HCT116 (cell line): ENCODE measurements at regions of chr20 and their contacts with region 1.

Region 1: GRCh38 chr20:50790651-50791277 is 4.1 kb upstream of the BCAS4 start:
- DNase-seq: peak; percentile 82
- ATAC-seq: peak; percentile 83
- H3K4me3 ChIP-seq: peak overlapping the region in 1 of 2 experiments; percentile 28; a peak in 2 of 4 replicates
- H3K27ac ChIP-seq: peak overlapping the region; percentile 83
- H3K4me1 ChIP-seq: peaks cover 22 to 54% of the 10 kb centered on the region in 2 experiments
- H3K27me3 ChIP-seq: no peaks in the 10 kb centered on the region
- CTCF ChIP-seq: peak; percentile 64 to 86 (median 74); a peak in 5 of 6 replicates
- POLR2A ChIP-seq: peak; percentile 54
- RAD21 ChIP-seq: peak; percentile 46

Region 2: GRCh38 chr20:50588034-50588611 is 202.6 kb before region 1 on chr20:
- CTCF ChIA-PET with region 1: interaction called, 10 read pairs
- POLR2A ChIA-PET with region 1: no interaction called
- RAD21 ChIA-PET with region 1: no interaction called
- intact Hi-C with region 1: loop called (anchors 2 kb)
- DNase-seq: peak; percentile 39
- ATAC-seq: peak; percentile 88
- H3K4me3 ChIP-seq: no peak overlapping the region
- H3K27ac ChIP-seq: no peak overlapping the region
- H3K4me1 ChIP-seq: no peaks in the 10 kb centered on the region
- H3K27me3 ChIP-seq: no peaks in the 10 kb centered on the region
- CTCF ChIP-seq: peak; percentile 97 to 100 (median 100)
- POLR2A ChIP-seq: no peak
- RAD21 ChIP-seq: peak; percentile 68

Region 3: GRCh38 chr20:50635667-50636503 is 154.9 kb before region 1 on chr20:
- CTCF ChIA-PET with region 1: interaction called, 13 read pairs
- POLR2A ChIA-PET with region 1: interaction called, 3 read pairs
- RAD21 ChIA-PET with region 1: no interaction called
- intact Hi-C with region 1: no loop called
- DNase-seq: peak; percentile 67
- ATAC-seq: peak; percentile 87
- H3K4me3 ChIP-seq: peak overlapping the region; percentile 44 to 56
- H3K27ac ChIP-seq: peak overlapping the region; percentile 11; the same call in 1 of the 2 replicates
- H3K4me1 ChIP-seq: peaks cover 13 to 30% of the 10 kb centered on the region in 2 experiments
- H3K27me3 ChIP-seq: no peaks in the 10 kb centered on the region
- CTCF ChIP-seq: peak; percentile 75 to 99 (median 99); a peak in 5 of 6 replicates
- POLR2A ChIP-seq: no peak
- RAD21 ChIP-seq: peak; percentile 64

Region 4: DNA sequence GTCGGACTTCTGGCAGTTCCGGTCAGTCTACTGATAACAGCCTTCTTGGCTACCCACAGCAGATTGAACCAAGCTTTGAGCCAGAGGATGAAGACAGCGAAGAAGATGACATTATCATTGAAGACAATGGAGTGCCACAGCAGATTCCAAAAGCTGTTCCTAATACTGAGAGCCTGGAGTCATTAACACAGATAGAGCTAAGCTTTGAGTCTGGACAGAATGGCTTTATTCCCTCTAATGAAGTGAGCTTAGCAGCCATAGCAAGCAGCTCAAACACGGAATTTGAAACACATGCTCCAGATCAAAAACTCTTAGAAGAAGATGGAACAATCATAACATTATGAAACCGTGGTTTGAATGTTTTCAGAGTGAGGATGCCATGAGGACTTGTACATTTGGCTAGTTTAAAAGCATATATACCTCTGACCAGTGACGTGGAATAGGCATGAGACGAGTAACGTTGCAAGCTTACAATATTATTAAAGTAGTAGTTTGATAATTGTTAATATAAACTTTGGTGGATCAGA is 40.6 kb before region 1 on chr20:
- CTCF ChIA-PET with region 1: interaction called, 13 read pairs
- POLR2A ChIA-PET with region 1: interaction called, 5 read pairs
- RAD21 ChIA-PET with region 1: interaction called in 1 of 2 experiments, 3 read pairs
- intact Hi-C with region 1: no loop called
- DNase-seq: no peak
- ATAC-seq: no peak
- H3K4me3 ChIP-seq: no peak overlapping the region
- H3K27ac ChIP-seq: no peak overlapping the region
- H3K4me1 ChIP-seq: peaks cover 28 to 31% of the 10 kb centered on the region in 2 experiments
- H3K27me3 ChIP-seq: no peaks in the 10 kb centered on the region
- CTCF ChIP-seq: no peak
- POLR2A ChIP-seq: no peak
- RAD21 ChIP-seq: no peak

Region 5: DNA sequence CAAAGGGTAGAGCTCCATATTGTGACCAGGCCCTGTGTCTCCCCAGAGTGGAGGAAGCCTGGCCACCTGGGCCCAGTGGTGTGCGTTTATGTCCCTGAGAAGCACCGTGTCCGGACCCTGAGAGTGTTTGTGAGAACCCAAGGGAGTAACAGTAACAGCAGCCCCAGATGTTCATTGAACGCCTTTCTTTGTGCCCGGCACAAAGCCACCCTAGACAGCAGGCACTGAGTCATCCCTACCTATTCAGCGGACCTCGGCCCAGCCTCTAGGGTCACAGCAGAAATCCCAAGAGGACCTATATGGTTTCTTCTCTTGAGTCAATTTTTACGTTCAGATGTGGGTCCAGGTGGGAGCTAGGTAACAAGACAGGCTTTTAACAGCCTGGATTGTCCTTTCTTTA is 28.6 kb after region 1 on chr20:
- CTCF ChIA-PET with region 1: interaction called, 16 read pairs
- POLR2A ChIA-PET with region 1: no interaction called
- RAD21 ChIA-PET with region 1: interaction called, 3 read pairs
- intact Hi-C with region 1: no loop called
- DNase-seq: no peak
- ATAC-seq: no peak
- H3K4me3 ChIP-seq: no peak overlapping the region
- H3K27ac ChIP-seq: peak overlapping the region; percentile 49; the same call in 1 of the 2 replicates
- H3K4me1 ChIP-seq: peaks cover 16% of the 10 kb centered on the region in 2 experiments; a peak in 3 of 4 replicates
- H3K27me3 ChIP-seq: no peaks in the 10 kb centered on the region
- CTCF ChIP-seq: no peak
- POLR2A ChIP-seq: no peak
- RAD21 ChIP-seq: no peak

Region 6: GRCh38 chr20:50980851-50981713 is 190.3 kb after region 1 on chr20:
- CTCF ChIA-PET with region 1: interaction called, 11 read pairs
- POLR2A ChIA-PET with region 1: no interaction called
- RAD21 ChIA-PET with region 1: no interaction called
- intact Hi-C with region 1: no loop called
- DNase-seq: peak; percentile 41
- ATAC-seq: peak; percentile 76
- H3K4me3 ChIP-seq: no peak overlapping the region
- H3K27ac ChIP-seq: no peak overlapping the region
- H3K4me1 ChIP-seq: peaks cover 0 to 14% of the 10 kb centered on the region in 2 experiments; a peak in 2 of 4 replicates
- H3K27me3 ChIP-seq: no peaks in the 10 kb centered on the region
- CTCF ChIP-seq: peak; percentile 48 to 96 (median 85); a peak in 5 of 6 replicates
- POLR2A ChIP-seq: no peak
- RAD21 ChIP-seq: peak; percentile 75

Region 7: DNA sequence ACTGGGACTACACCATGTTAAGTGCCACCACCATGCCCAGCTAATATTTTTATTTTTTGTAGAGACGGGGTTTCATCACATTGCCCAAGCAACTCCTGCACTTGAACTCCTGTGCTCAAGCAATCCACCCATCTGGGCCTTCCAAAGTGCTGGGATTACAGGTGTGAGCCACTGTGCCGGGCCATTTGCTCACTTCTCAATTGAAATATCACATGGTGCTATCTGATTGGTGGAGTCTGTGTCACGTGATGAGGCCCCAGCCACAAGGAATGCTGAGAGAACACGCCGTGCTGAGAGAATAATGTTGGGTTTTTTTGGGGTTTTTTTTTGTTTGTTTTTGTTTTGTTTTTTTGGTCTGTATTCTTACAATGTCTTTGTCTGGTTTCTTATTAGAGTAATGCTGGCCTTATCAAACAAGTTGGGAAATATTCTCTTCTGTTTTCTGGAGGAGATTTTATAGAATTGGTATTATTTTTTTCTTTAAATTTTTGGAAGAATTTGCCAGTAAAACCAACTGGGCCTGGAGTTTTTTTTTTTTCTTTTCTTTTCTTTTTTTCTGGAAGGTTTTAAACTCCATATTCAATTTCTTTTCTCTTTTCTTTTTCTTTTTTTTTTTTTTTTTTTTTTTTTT is 415.4 kb after region 1 on chr20:
- CTCF ChIA-PET with region 1: no interaction called
- POLR2A ChIA-PET with region 1: no interaction called
- RAD21 ChIA-PET with region 1: no interaction called
- intact Hi-C with region 1: no loop called
- DNase-seq: peak; percentile 21
- ATAC-seq: peak; percentile 58; the same call in 1 of the 2 replicates
- H3K4me3 ChIP-seq: no peak overlapping the region
- H3K27ac ChIP-seq: no peak overlapping the region
- H3K4me1 ChIP-seq: no peaks in the 10 kb centered on the region; a peak in 1 of 4 replicates
- H3K27me3 ChIP-seq: peaks cover 25% of the 10 kb centered on the region; the same call in 1 of the 2 replicates
- CTCF ChIP-seq: no peak
- POLR2A ChIP-seq: no peak
- RAD21 ChIP-seq: no peak

Region 8: DNA sequence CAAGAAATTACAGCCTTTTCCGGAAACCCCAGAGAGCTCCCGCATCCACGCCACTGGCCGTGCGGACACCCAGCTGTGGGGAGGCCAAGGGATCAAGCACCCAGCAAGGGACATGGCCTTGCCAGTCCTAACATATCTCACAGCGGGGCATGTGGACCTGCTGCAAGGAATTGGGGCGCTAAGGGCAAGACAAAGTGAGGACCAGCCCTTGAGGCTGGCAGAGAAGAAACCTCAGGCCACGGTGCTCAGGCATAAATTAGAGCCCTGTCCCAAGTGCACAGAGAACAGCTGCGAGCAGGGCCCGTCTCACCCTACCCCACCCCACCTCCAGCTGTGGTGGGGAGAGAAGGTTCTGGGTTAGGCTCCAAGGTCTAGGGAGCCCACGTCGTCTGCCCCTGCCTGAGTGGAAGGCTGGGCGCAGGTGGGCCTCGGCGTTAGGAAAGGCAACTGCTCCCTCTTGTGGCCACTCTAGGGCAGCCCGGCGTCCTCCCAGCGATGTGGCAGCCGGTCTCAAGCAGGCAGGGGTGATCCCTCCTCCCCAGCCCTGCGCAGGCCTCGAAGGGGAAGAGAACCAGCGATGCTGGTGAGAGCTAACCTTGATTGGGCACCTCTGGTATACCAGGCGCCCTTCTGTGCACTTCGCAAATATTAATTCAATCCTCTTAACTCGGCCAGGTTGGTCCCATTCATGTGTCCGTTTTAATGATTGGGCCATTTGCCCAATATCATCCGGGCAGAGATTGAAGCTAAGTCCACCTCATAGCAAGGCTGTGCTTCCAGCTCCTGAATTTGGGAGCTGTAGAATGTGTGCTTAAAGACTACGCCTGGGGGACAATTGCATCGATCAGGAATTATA is 516.0 kb after region 1 on chr20:
- CTCF ChIA-PET with region 1: interaction called, 9 read pairs
- POLR2A ChIA-PET with region 1: no interaction called
- RAD21 ChIA-PET with region 1: no interaction called
- intact Hi-C with region 1: loop called (anchors 5 kb)
- DNase-seq: peak; percentile 62
- ATAC-seq: peak; percentile 100
- H3K4me3 ChIP-seq: no peak overlapping the region
- H3K27ac ChIP-seq: no peak overlapping the region; the same call in 1 of the 2 replicates
- H3K4me1 ChIP-seq: peaks cover 0 to 7% of the 10 kb centered on the region in 2 experiments; a peak in 1 of 4 replicates
- H3K27me3 ChIP-seq: no peaks in the 10 kb centered on the region
- CTCF ChIP-seq: peak; percentile 85 to 95 (median 88)
- POLR2A ChIP-seq: no peak
- RAD21 ChIP-seq: peak; percentile 99